ENCODE measurements at regions of chr4 and their contacts with region 1.

Region 1: GRCh38 chr4:89134775-89135319 is 23.5 kb downstream of the TIGD2 start:
- DNase-seq: peak in 1 of 5 donors; percentile 20
- ATAC-seq: peak in 3 of 4 donors; percentile 31 to 58 (median 49)
- H3K4me3 ChIP-seq: no peak overlapping the region
- H3K27ac ChIP-seq: peak overlapping the region in 2 of 12 donors; percentile 20 to 32
- H3K4me1 ChIP-seq: peaks cover 0 to 11% (median 0%) of the 10 kb centered on the region in 12 donors
- H3K27me3 ChIP-seq: no peaks in the 10 kb centered on the region
- CTCF ChIP-seq: no peak
- POLR2A ChIP-seq: no peak

Region 2: DNA sequence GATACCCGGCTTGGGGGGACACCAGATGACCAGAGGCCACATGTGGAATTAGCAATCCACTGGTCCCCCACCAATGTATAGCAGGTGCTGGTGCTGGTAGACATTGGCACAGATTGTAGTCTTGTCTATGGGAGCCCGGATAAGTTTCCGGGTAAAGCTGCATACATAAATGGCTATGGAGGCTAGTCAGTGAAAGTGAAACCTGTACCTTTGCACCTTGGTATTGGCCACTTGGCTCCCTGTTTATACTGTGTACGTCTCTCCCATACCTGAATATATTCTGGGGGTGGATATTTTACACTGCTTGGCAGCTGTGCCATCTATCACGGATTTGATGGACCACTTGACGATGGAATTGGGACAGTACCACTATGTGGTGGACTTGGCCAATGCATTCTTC is 29.1 kb before region 1 on chr4:
- intact Hi-C with region 1: loop called in 1 of 10 experiments (anchors 1 kb)
- DNase-seq: no peak
- ATAC-seq: no peak
- H3K4me3 ChIP-seq: no peak overlapping the region
- H3K27ac ChIP-seq: no peak overlapping the region
- H3K4me1 ChIP-seq: peaks cover 0 to 13% (median 6%) of the 10 kb centered on the region in 12 donors
- H3K27me3 ChIP-seq: peaks cover 0 to 11% (median 0%) of the 10 kb centered on the region in 9 donors
- CTCF ChIP-seq: no peak
- POLR2A ChIP-seq: no peak

Measured in heart left ventricle (tissue), 16 donors.